ENCODE measurements at regions of chr21 and their contacts with region 1.

Region 1: GRCh38 chr21:44892536-44893277 is 19.2 kb upstream of the PTTG1IP start:
- DNase-seq: no peak
- ATAC-seq: peak; percentile 75 to 90
- H3K4me3 ChIP-seq: no peak overlapping the region
- H3K27ac ChIP-seq: peak overlapping the region; percentile 28 to 71; a peak in 4 of 6 replicates
- H3K4me1 ChIP-seq: no peaks in the 10 kb centered on the region
- CTCF ChIP-seq: peak; percentile 68
- EP300 ChIP-seq: no peak
- POLR2A ChIP-seq: no peak
- RAD21 ChIP-seq: peak; percentile 58 to 60

Region 2: GRCh38 chr21:44880762-44881585 is 11.7 kb before region 1 on chr21:
- CTCF ChIA-PET with region 1: interaction called, 18 read pairs
- POLR2A ChIA-PET with region 1: no interaction called
- DNase-seq: no peak
- ATAC-seq: no peak
- H3K4me3 ChIP-seq: no peak overlapping the region
- H3K27ac ChIP-seq: peak overlapping the region; percentile 22 to 43; a peak in 5 of 6 replicates
- H3K4me1 ChIP-seq: peaks cover 28% of the 10 kb centered on the region
- CTCF ChIP-seq: no peak
- EP300 ChIP-seq: no peak
- POLR2A ChIP-seq: no peak
- RAD21 ChIP-seq: no peak

Region 3: DNA sequence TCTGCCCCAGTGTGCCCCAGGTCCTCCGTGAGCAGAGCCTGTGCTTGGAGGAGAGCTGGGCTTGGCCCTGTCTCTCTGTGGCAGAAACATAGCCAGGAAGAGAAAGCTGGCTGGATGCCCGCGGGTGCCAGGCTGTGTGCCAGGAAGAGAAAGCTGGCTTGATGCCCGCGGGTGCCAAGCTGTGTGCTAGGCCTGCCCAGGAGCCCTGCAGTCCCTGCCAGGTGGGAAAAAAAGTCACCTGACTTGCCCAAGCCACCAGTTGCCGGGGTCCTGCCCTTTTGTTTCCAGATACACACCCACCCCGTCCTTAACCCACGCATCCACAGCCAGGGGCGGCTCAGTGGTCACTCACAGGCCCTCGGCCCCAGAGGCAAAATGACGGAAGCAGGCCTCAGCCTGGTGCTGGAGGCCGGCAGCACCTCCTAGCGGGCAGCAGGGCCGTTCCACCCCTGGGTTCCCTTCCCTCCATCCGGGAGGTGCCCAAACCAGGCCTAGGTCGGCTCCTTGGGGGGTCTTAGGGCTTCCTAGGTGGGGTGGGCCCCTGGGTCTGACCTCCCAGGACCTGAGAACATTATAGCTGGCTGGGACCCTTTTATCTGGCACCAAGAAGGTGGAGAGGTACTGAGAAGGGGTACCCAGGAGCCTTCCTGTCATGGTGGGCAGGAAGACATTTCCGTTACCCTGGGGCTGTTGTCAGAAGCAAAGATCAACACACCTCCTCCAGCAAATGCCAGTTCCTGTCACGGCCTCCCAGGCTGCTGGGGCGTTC is 18.9 kb after region 1 on chr21:
- CTCF ChIA-PET with region 1: interaction called, 24 read pairs
- POLR2A ChIA-PET with region 1: no interaction called
- DNase-seq: peak in 1 of 2 experiments; percentile 56
- ATAC-seq: peak; percentile 71 to 91
- H3K4me3 ChIP-seq: no peak overlapping the region
- H3K27ac ChIP-seq: peak overlapping the region; percentile 73 to 87
- H3K4me1 ChIP-seq: peaks cover 39% of the 10 kb centered on the region
- CTCF ChIP-seq: peak; percentile 41
- EP300 ChIP-seq: no peak
- POLR2A ChIP-seq: no peak
- RAD21 ChIP-seq: peak; percentile 35 to 47; a peak in 4 of 5 replicates

Measured in A549 (cell line).